ENCODE measurements at regions of chr1 and their contacts with region 1.

Region 1: GRCh38 chr1:197391303-197392226 is 123.5 kb downstream of the CRB1 start:
- DNase-seq: peak in 7 of 9 donors; percentile 63 to 89 (median 82)
- ATAC-seq: peak; percentile 95
- H3K4me3 ChIP-seq: no peak overlapping the region
- H3K4me3 Mint-ChIP-seq: peak overlapping the region in 9 of 10 donors; percentile 28 to 72 (median 68)
- H3K27ac ChIP-seq: peak overlapping the region; percentile 45
- H3K27ac Mint-ChIP-seq: peak overlapping the region; percentile 65 to 93 (median 88)
- H3K4me1 ChIP-seq: peaks cover 0 to 28% of the 10 kb centered on the region in 2 donors
- H3K4me1 Mint-ChIP-seq: peaks cover 18 to 56% (median 46%) of the 10 kb centered on the region in 7 donors
- H3K27me3 ChIP-seq: no peaks in the 10 kb centered on the region
- H3K27me3 Mint-ChIP-seq: peaks cover 0 to 20% (median 0%) of the 10 kb centered on the region in 5 donors

Region 2: DNA sequence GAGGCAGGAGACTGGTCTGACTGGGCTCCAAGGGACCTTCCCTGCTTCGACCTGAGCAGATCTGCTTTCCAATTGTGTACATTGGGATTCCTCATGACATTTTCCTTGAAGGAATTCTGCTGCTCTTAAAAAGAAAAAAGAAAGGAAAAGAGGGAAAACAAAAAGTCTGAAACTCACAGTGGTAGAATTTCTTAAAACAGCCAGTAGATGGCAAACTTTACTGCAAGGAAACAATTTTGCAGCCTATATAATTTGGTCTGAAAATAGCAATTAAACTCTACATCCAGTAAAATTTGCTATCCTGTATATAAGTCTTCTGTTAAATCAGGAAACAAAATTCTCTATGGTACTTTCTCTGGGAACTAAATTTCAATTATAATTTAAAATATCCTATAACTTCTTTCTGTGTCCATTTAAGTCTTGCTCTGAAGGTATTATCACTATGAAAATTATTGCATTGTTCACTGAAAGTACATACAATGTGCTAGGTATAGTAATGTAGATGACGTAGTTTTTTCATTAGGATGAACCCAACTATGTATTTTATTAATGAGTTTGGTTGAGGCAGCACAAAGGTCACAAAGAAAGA is 63.7 kb before region 1 on chr1:
- CTCF ChIA-PET with region 1: no interaction called
- POLR2A ChIA-PET with region 1: no interaction called
- intact Hi-C with region 1: loop called in 1 of 2 experiments (anchors 5 kb)
- DNase-seq: peak in 4 of 9 donors; percentile 11 to 23 (median 17)
- ATAC-seq: no peak
- H3K4me3 ChIP-seq: no peak overlapping the region
- H3K4me3 Mint-ChIP-seq: no peak overlapping the region
- H3K27ac ChIP-seq: no peak overlapping the region
- H3K27ac Mint-ChIP-seq: no peak overlapping the region
- H3K4me1 ChIP-seq: no peaks in the 10 kb centered on the region
- H3K4me1 Mint-ChIP-seq: no peaks in the 10 kb centered on the region
- H3K27me3 ChIP-seq: no peaks in the 10 kb centered on the region
- H3K27me3 Mint-ChIP-seq: peaks cover 0 to 3% (median 0%) of the 10 kb centered on the region in 5 donors

Region 3: DNA sequence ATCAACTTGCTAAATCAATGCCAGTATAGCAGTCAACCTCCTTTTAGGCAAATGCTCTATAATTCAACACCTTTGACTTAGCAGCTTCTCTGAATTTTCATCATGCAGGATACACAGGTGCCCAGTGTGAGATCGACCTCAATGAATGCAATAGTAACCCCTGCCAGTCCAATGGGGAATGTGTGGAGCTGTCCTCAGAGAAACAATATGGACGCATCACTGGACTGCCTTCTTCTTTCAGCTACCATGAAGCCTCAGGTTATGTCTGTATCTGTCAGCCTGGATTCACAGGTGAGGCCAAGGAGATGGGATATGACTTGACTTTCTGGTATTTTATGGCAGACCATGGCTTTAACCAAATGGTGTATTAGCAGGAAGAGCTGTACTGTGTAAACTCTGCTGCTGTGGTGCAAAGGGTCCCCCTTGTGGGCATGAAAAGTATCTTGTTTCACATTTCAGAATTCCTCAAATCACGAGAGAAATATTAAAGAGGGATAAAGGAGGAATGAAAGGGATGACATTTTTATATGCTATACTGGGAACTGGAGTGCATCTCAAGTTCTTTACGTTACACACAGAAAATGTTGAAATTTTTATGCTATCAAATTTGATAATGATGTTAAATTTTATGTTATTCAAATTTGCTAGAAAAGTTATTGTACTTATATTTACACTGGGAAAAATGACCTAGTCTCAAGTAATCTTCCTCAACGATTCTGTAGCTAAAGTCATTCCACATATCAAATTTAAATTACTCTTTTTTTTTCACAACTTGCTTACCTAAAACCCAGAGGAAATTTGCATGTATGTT is 34.6 kb before region 1 on chr1:
- CTCF ChIA-PET with region 1: no interaction called
- POLR2A ChIA-PET with region 1: no interaction called
- intact Hi-C with region 1: loop called in 1 of 2 experiments (anchors 5 kb)
- DNase-seq: peak in 5 of 9 donors; percentile 19 to 36 (median 25)
- ATAC-seq: peak; percentile 68
- H3K4me3 ChIP-seq: no peak overlapping the region
- H3K4me3 Mint-ChIP-seq: no peak overlapping the region
- H3K27ac ChIP-seq: no peak overlapping the region
- H3K27ac Mint-ChIP-seq: no peak overlapping the region
- H3K4me1 ChIP-seq: no peaks in the 10 kb centered on the region
- H3K4me1 Mint-ChIP-seq: peaks cover 0 to 3% (median 0%) of the 10 kb centered on the region in 7 donors
- H3K27me3 ChIP-seq: no peaks in the 10 kb centered on the region
- H3K27me3 Mint-ChIP-seq: no peaks in the 10 kb centered on the region

Region 4: DNA sequence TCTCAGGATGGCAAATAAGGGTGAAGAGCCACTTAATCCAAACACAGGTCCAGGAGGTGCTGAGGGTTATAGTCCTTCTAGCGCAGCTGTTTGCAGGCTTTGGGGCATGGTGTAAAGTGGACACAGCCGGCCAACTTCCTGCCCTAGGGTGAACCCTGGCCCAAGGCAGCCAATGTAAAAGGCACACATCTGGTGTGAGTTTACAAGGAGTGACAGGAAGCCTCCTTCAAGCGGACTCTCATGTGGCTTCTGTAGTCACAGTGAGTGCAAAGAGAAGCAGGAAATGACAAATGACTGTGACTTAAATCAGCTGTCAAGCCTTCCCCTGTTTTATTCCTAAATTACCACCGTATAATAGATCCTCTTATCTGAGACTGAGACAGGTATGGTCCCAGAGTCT is 89.5 kb after region 1 on chr1:
- CTCF ChIA-PET with region 1: no interaction called
- POLR2A ChIA-PET with region 1: no interaction called
- intact Hi-C with region 1: loop called in 1 of 2 experiments (anchors 5 kb)
- DNase-seq: peak in 6 of 9 donors; percentile 5 to 43 (median 36)
- ATAC-seq: peak; percentile 76
- H3K4me3 ChIP-seq: no peak overlapping the region
- H3K4me3 Mint-ChIP-seq: peak overlapping the region in 9 of 10 donors; percentile 31 to 70 (median 46)
- H3K27ac ChIP-seq: no peak overlapping the region
- H3K27ac Mint-ChIP-seq: peak overlapping the region in 5 of 9 donors; percentile 20 to 88 (median 67)
- H3K4me1 ChIP-seq: peaks cover 7 to 11% of the 10 kb centered on the region in 2 donors
- H3K4me1 Mint-ChIP-seq: peaks cover 4 to 22% (median 19%) of the 10 kb centered on the region in 7 donors
- H3K27me3 ChIP-seq: no peaks in the 10 kb centered on the region
- H3K27me3 Mint-ChIP-seq: peaks cover 0 to 13% (median 3%) of the 10 kb centered on the region in 5 donors

Region 5: DNA sequence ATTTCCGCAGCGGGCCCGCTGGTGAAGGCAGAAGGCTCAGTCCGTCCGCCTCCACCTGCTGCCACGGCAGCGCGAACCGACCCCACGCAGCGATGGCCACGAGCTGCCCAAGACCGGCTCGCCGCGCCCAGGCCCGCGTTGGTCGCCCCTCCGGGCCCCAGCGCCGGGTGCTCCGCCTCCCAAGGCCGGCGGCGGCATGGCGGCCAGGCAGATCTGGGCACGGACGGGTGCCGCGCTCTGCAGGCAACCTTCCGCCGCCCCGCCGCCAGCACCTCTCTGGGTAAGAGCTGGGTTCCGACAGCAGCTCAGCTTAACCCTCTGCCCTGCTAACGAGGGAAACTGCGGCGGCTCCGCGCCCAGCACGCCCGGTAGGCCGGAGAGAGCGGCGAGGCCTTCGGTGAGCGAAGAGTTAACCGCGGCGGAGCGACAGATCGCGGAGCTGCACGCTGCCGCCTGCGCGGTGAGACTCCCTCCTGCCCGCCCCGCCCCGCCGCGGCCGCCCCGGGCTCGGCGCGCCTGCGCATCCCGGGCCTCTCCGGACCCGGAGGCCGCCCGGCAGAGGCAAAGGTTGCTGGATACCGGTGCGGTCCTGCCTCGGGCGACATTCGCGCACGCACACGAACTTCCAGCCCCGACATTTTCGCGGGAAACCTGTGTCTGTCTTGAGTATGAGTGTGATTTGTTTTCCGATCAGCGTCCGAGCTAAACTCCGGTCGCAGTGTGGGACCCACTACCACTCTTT is 511.1 kb after region 1 on chr1 and contains the start of gene C1orf53:
- CTCF ChIA-PET with region 1: no interaction called
- POLR2A ChIA-PET with region 1: no interaction called
- intact Hi-C with region 1: loop called in 1 of 2 experiments (anchors 5 kb)
- DNase-seq: peak; percentile 58 to 87 (median 74)
- ATAC-seq: peak; percentile 94
- H3K4me3 ChIP-seq: peak within 1 kb of the TSS; percentile 71
- H3K4me3 Mint-ChIP-seq: peak within 1 kb of the TSS; percentile 79 to 97 (median 92)
- H3K27ac ChIP-seq: peak within 1 kb of the TSS; percentile 50
- H3K27ac Mint-ChIP-seq: peak within 1 kb of the TSS; percentile 7 to 82 (median 79)
- H3K4me1 ChIP-seq: peaks cover 4% of the 10 kb centered on the region in 2 donors
- H3K4me1 Mint-ChIP-seq: peaks cover 6 to 19% (median 14%) of the 10 kb centered on the region in 7 donors
- H3K27me3 ChIP-seq: peaks cover 0 to 23% of the 10 kb centered on the region in 2 donors
- H3K27me3 Mint-ChIP-seq: peaks cover 46 to 68% (median 54%) of the 10 kb centered on the region in 5 donors
- total RNA-seq, gene C1orf53: not detected